ENCODE measurements at regions of chr18 and their contacts with region 1.

Region 1: GRCh38 chr18:2547477-2548087 is 23.7 kb downstream of the METTL4 start:
- DNase-seq: peak in 7 of 9 donors; percentile 13 to 50 (median 37)
- ATAC-seq: peak; percentile 72
- H3K4me3 ChIP-seq: no peak overlapping the region
- H3K4me3 Mint-ChIP-seq: no peak overlapping the region
- H3K27ac ChIP-seq: no peak overlapping the region
- H3K27ac Mint-ChIP-seq: peak overlapping the region in 3 of 9 donors; percentile 0 to 10 (median 6)
- H3K4me1 ChIP-seq: no peaks in the 10 kb centered on the region
- H3K4me1 Mint-ChIP-seq: peaks cover 3 to 33% (median 23%) of the 10 kb centered on the region in 7 donors
- H3K27me3 ChIP-seq: no peaks in the 10 kb centered on the region
- H3K27me3 Mint-ChIP-seq: no peaks in the 10 kb centered on the region

Region 2: GRCh38 chr18:864872-865273 is 1682.7 kb before region 1 on chr18:
- CTCF ChIA-PET with region 1: interaction called, 4 read pairs
- POLR2A ChIA-PET with region 1: no interaction called
- intact Hi-C with region 1: loop called (anchors 1 to 5 kb)
- DNase-seq: peak; percentile 18 to 59 (median 46)
- ATAC-seq: peak; percentile 76
- H3K4me3 ChIP-seq: no peak overlapping the region
- H3K4me3 Mint-ChIP-seq: peak overlapping the region in 2 of 10 donors; percentile 11 to 23
- H3K27ac ChIP-seq: no peak overlapping the region
- H3K27ac Mint-ChIP-seq: no peak overlapping the region
- H3K4me1 ChIP-seq: no peaks in the 10 kb centered on the region
- H3K4me1 Mint-ChIP-seq: peaks cover 3 to 6% (median 4%) of the 10 kb centered on the region in 7 donors
- H3K27me3 ChIP-seq: peaks cover 0 to 5% of the 10 kb centered on the region in 2 donors
- H3K27me3 Mint-ChIP-seq: peaks cover 18 to 40% (median 20%) of the 10 kb centered on the region in 5 donors

Region 3: DNA sequence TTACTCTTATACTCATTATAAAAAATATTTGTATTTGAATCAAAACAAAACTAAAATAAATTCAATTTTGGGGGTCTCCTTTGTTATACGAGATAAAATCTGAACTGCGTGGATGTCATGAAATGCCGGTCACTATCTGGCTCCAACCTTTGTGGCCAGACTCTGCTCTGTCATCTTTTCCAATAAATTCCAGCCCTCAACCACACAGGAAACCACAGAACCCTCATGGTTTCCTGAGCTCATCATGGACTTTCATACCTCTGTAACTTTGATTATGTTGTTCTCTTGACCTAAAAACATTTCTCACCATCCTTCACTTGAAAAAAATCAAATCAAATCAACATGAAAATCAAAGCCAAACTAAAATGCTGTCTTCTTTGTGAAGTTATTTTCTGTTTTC is 700.9 kb before region 1 on chr18:
- CTCF ChIA-PET with region 1: no interaction called
- POLR2A ChIA-PET with region 1: no interaction called
- intact Hi-C with region 1: no loop called
- DNase-seq: no peak
- ATAC-seq: no peak
- H3K4me3 ChIP-seq: no peak overlapping the region
- H3K4me3 Mint-ChIP-seq: no peak overlapping the region
- H3K27ac ChIP-seq: no peak overlapping the region
- H3K27ac Mint-ChIP-seq: no peak overlapping the region
- H3K4me1 ChIP-seq: no peaks in the 10 kb centered on the region
- H3K4me1 Mint-ChIP-seq: peaks cover 0 to 3% (median 0%) of the 10 kb centered on the region in 7 donors
- H3K27me3 ChIP-seq: no peaks in the 10 kb centered on the region
- H3K27me3 Mint-ChIP-seq: peaks cover 0 to 20% (median 7%) of the 10 kb centered on the region in 5 donors

Region 4: DNA sequence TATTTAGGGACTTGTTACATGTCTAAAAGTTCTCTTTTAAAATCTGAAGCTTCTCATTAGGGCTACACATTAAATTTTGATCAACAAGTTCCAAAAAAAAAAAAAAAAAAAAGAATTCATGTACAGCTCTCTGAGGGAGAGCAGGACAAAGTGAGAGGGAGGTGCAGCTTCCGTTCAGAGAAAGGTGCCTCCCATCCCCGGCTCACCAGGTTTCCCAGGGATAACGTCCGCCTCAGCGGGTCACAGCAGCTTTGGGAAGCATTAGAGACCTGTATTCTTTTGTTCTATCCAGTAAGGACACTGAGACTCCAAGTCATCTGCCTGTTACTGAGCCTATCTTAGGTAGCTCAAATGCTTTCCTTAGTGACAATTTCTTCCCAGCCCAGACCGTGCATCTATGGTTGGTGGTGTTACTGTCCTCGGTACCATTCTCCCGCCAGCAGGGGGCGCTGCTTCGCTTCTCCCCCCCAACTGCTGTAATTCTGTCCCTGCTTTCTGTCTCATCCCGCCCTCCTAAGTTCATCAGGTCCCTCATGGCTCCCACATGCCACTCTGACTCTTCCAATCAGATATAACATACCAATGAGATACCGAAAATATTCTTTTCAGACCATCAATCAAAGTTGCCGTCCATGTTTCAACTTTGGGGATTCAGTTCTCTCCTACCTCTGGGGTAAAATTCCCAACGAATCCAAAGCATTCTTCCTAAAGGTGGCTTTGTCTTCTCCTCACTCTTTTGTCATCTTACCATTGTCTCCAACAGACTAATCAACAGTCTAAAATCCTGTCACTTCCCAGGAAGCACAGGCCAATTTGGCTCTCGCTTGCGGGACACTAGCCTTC is 442.7 kb before region 1 on chr18:
- CTCF ChIA-PET with region 1: interaction called, 4 read pairs
- POLR2A ChIA-PET with region 1: no interaction called
- intact Hi-C with region 1: loop called in 1 of 2 experiments (anchors 1 kb)
- DNase-seq: peak in 7 of 9 donors; percentile 4 to 59 (median 9)
- ATAC-seq: peak; percentile 60
- H3K4me3 ChIP-seq: no peak overlapping the region
- H3K4me3 Mint-ChIP-seq: no peak overlapping the region
- H3K27ac ChIP-seq: no peak overlapping the region
- H3K27ac Mint-ChIP-seq: no peak overlapping the region
- H3K4me1 ChIP-seq: no peaks in the 10 kb centered on the region
- H3K4me1 Mint-ChIP-seq: peaks cover 0 to 2% (median 0%) of the 10 kb centered on the region in 7 donors
- H3K27me3 ChIP-seq: no peaks in the 10 kb centered on the region
- H3K27me3 Mint-ChIP-seq: peaks cover 2 to 24% (median 12%) of the 10 kb centered on the region in 5 donors

Region 5: GRCh38 chr18:2606335-2606734 is 58.8 kb after region 1 on chr18:
- CTCF ChIA-PET with region 1: no interaction called
- POLR2A ChIA-PET with region 1: no interaction called
- intact Hi-C with region 1: loop called in 1 of 2 experiments (anchors 2 kb)
- DNase-seq: peak in 6 of 9 donors; percentile 42 to 65 (median 53)
- ATAC-seq: peak; percentile 73
- H3K4me3 ChIP-seq: no peak overlapping the region
- H3K4me3 Mint-ChIP-seq: peak overlapping the region; percentile 16 to 84 (median 70)
- H3K27ac ChIP-seq: peak overlapping the region; percentile 73
- H3K27ac Mint-ChIP-seq: peak overlapping the region; percentile 79 to 94 (median 87)
- H3K4me1 ChIP-seq: peaks cover 28 to 35% of the 10 kb centered on the region in 2 donors
- H3K4me1 Mint-ChIP-seq: peaks cover 22 to 79% (median 64%) of the 10 kb centered on the region in 7 donors
- H3K27me3 ChIP-seq: no peaks in the 10 kb centered on the region
- H3K27me3 Mint-ChIP-seq: no peaks in the 10 kb centered on the region

Measured in naive thymus-derived CD4-positive, alpha-beta T cell (primary cell).